CD14-positive monocyte (primary cell): ENCODE measurements at regions of chr14 and their contacts with region 1.

Region 1: GRCh38 chr14:106442857-106443256 is 916.5 kb downstream of the TMEM121 start:
- DNase-seq: no peak
- H3K4me3 ChIP-seq: no peak overlapping the region
- H3K4me3 Mint-ChIP-seq: peak overlapping the region in 1 of 2 donors; percentile 6
- H3K27ac ChIP-seq: no peak overlapping the region
- H3K27ac Mint-ChIP-seq: no peak overlapping the region
- H3K4me1 ChIP-seq: no peaks in the 10 kb centered on the region
- H3K4me1 Mint-ChIP-seq: peaks cover 1% of the 10 kb centered on the region
- H3K27me3 ChIP-seq: no peaks in the 10 kb centered on the region
- H3K27me3 Mint-ChIP-seq: peaks cover 2 to 4% (median 2%) of the 10 kb centered on the region in 3 donors
- CTCF ChIP-seq: peak; percentile 65

Region 2: GRCh38 chr14:106491851-106492250 is 49.0 kb after region 1 on chr14:
- intact Hi-C with region 1: no loop called
- DNase-seq: no peak
- H3K4me3 ChIP-seq: no peak overlapping the region
- H3K4me3 Mint-ChIP-seq: no peak overlapping the region
- H3K27ac ChIP-seq: no peak overlapping the region
- H3K27ac Mint-ChIP-seq: no peak overlapping the region
- H3K4me1 ChIP-seq: peaks cover 0 to 5% of the 10 kb centered on the region in 2 donors
- H3K4me1 Mint-ChIP-seq: peaks cover 12% of the 10 kb centered on the region
- H3K27me3 ChIP-seq: no peaks in the 10 kb centered on the region
- H3K27me3 Mint-ChIP-seq: peaks cover 0 to 2% (median 0%) of the 10 kb centered on the region in 3 donors
- CTCF ChIP-seq: peak; percentile 61

Region 3: GRCh38 chr14:106501898-106502297 is 59.0 kb after region 1 on chr14:
- intact Hi-C with region 1: no loop called
- DNase-seq: no peak
- H3K4me3 ChIP-seq: no peak overlapping the region
- H3K4me3 Mint-ChIP-seq: no peak overlapping the region
- H3K27ac ChIP-seq: no peak overlapping the region
- H3K27ac Mint-ChIP-seq: no peak overlapping the region
- H3K4me1 ChIP-seq: no peaks in the 10 kb centered on the region
- H3K4me1 Mint-ChIP-seq: peaks cover 4% of the 10 kb centered on the region
- H3K27me3 ChIP-seq: no peaks in the 10 kb centered on the region
- H3K27me3 Mint-ChIP-seq: peaks cover 1 to 2% (median 2%) of the 10 kb centered on the region in 3 donors
- CTCF ChIP-seq: no peak

Region 4: DNA sequence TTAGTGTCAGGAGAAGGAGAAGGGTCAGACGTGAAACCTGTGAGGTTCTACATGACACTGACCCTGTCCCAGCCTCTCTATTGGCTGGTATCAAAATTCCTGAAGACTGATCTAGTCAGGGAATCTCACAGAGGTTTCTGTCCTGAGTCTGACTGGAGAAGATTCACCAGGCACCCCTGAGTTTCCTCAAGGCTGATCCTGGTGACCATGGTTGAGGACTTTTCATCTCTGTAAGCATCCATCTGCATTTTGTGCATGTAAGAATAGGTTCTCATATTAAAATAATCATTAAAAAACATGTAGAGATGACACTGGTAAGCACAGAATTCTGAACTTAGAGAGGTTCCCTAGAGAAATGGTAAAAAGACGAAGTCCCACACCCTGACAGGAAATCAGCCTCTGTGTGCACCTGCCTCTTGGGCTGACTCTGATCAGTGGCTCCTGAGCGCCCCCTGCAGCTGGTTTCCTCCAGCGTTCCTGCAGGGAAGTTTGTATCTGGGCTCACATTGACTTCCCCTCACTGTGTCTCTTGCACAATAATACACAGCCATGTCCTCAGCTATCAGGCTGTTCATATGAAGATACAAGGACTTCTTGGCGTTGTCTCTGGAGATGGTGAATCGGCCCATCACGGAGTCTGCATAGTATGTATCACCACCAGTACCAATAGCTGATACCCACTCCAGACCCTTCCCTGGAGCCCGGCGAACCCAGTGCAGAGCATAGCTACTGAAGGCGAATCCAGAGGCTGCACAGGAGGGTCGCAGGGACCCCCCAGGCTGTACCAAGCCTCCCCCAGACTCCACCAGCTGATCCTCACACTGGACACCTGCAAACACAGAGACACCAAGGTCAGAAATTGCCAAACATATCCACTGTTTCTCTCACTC is 75.4 kb after region 1 on chr14:
- intact Hi-C with region 1: loop called in 1 of 2 experiments (anchors 10 kb)
- DNase-seq: peak; percentile 25 to 48 (median 43)
- H3K4me3 ChIP-seq: no peak overlapping the region
- H3K4me3 Mint-ChIP-seq: no peak overlapping the region
- H3K27ac ChIP-seq: no peak overlapping the region
- H3K27ac Mint-ChIP-seq: no peak overlapping the region
- H3K4me1 ChIP-seq: peaks cover 10 to 23% of the 10 kb centered on the region in 2 donors
- H3K4me1 Mint-ChIP-seq: peaks cover 20% of the 10 kb centered on the region
- H3K27me3 ChIP-seq: no peaks in the 10 kb centered on the region
- H3K27me3 Mint-ChIP-seq: peaks cover 0 to 4% (median 0%) of the 10 kb centered on the region in 3 donors
- CTCF ChIP-seq: peak; percentile 73